Activated CD4-positive, alpha-beta memory T cell treated with anti-CD3 and anti-CD28 coated beads, Interleukin-2, amount 10 ng/mL, durations not matched to agents 7 days and 5 days (primary cell): ENCODE measurements at regions of chr20 and their contacts with region 1.

Region 1: GRCh38 chr20:38083338-38084048 is 49.9 kb downstream of the RPRD1B start:
- DNase-seq: no peak
- H3K4me3 Mint-ChIP-seq: no peak overlapping the region
- H3K27ac Mint-ChIP-seq: no peak overlapping the region
- H3K4me1 Mint-ChIP-seq: no peaks in the 10 kb centered on the region
- H3K27me3 Mint-ChIP-seq: no peaks in the 10 kb centered on the region

Region 2: GRCh38 chr20:38057351-38057972 is 26.0 kb before region 1 on chr20:
- CTCF ChIA-PET with region 1: no interaction called
- POLR2A ChIA-PET with region 1: no interaction called
- DNase-seq: peak; percentile 77
- H3K4me3 Mint-ChIP-seq: no peak overlapping the region
- H3K27ac Mint-ChIP-seq: peak overlapping the region; percentile 32
- H3K4me1 Mint-ChIP-seq: peaks cover 26% of the 10 kb centered on the region
- H3K27me3 Mint-ChIP-seq: no peaks in the 10 kb centered on the region

Region 3: DNA sequence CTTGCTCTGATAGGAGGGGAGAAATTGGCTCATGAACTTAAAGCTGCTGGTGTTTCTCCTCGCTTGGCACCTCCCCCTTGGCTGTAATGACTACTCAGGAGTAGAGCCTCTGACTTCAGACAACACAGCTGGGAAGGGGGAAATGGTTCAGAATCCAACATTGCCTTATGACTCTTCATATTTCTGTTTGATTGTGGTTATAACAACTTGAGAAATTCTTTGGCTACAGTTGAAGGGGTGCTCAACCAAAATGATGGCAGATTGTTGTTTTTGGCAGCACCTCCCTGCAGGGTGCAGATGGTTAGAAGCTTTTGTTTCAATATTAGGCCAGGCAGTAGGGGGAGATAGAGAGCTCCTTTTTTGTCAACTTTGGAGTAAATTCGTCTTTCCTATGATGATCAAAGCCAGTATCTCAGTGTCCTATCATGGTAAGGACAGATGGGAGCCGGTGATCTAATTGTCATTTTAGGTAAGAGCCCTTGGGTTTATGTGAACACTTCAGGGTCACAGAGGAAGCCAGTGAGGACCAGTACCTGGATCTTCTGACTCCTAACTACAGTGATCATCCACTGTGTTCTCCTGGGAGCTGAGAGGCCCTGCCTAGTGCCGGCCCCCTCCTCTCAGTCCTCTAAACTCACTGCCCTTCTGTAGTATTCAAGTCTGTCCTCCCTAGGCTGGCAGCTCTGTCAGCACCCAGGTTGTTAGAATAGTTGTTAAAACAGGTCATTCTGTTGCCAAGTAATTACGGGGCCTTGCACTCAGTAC is 10.0 kb before region 1 on chr20:
- CTCF ChIA-PET with region 1: interaction called, 11 read pairs
- POLR2A ChIA-PET with region 1: interaction called, 3 read pairs
- DNase-seq: no peak
- H3K4me3 Mint-ChIP-seq: no peak overlapping the region
- H3K27ac Mint-ChIP-seq: no peak overlapping the region
- H3K4me1 Mint-ChIP-seq: no peaks in the 10 kb centered on the region
- H3K27me3 Mint-ChIP-seq: no peaks in the 10 kb centered on the region